ENCODE measurements at regions of chr19 and their contacts with region 1.

Region 1: DNA sequence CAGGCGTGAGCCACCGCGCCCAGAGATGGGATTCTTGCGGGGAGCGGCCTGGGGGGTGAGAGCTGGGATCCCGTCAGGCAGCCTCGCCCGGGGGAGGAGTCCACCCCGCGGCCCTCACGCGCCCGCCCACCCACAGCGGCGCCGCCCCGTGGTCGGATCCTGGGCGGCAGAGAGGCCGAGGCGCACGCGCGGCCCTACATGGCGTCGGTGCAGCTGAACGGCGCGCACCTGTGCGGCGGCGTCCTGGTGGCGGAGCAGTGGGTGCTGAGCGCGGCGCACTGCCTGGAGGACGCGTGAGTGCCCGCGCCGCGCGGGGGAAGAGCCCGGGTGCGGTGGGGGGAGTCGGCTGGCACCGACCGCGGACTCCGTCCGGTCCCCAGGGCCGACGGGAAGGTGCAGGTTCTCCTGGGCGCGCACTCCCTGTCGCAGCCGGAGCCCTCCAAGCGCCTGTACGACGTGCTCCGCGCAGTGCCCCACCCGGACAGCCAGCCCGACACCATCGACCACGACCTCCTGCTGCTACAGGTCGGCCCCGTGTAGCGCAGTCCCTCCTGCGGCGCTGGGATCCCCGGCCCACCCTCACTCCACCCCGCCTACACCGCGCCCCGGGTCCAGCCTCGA is 1.1 kb downstream of the CFD start:
- DNase-seq: peak; percentile 50
- H3K4me3 ChIP-seq: peak overlapping the region; percentile 44
- H3K27ac ChIP-seq: no peak overlapping the region
- H3K4me1 ChIP-seq: peaks cover 31% of the 10 kb centered on the region
- CTCF ChIP-seq: peak; percentile 45

Region 2: GRCh38 chr19:771332-771785 is 89.2 kb before region 1 on chr19:
- CTCF ChIA-PET with region 1: no interaction called
- POLR2A ChIA-PET with region 1: no interaction called
- intact Hi-C with region 1: loop called (anchors 2 kb)
- DNase-seq: peak; percentile 45
- H3K4me3 ChIP-seq: no peak overlapping the region
- H3K27ac ChIP-seq: no peak overlapping the region
- H3K4me1 ChIP-seq: no peaks in the 10 kb centered on the region
- CTCF ChIP-seq: peak; percentile 61

Region 3: GRCh38 chr19:835210-835810 is 25.3 kb before region 1 on chr19:
- CTCF ChIA-PET with region 1: no interaction called
- POLR2A ChIA-PET with region 1: no interaction called
- intact Hi-C with region 1: no loop called
- DNase-seq: no peak
- H3K4me3 ChIP-seq: no peak overlapping the region
- H3K27ac ChIP-seq: no peak overlapping the region
- H3K4me1 ChIP-seq: no peaks in the 10 kb centered on the region
- CTCF ChIP-seq: no peak

Region 4: DNA sequence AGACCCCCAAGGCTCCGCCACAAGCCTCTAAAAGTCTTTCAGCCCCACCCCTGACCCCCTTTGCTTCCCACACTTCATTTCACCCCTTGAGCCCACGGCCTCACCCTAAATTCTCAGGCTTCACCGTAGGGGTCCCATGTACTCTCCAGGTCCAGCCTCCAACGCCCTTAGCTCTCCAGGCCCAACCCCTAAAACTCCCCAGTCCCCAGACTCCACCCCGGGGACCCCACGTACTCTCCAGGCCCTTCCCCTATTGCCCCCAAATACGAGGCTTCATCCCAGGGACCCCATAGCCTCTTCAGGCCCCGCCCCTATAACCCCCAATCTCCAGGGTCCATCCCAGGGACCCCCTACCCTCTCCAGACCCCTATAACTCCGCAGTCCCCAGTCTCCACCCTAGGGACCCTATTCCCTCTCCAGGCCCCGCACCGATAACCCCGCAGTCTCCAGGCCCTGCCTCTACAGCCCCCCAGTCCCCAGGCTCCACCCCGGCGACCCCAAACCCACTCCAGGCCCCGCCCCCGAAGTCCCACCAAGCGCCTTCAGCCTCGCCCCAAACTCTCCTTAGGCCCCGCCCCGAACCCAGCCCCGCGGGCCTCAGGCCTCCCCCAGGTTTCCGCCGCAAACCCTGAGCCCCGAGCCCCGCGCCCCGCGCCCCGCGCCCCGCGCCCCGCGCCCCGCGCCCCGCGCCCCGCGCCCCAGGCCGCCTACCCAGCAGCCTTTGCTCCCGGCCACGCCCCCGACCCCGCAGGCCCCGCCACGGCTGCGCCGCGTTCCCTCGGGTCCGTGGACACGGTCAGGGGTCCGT is 31.9 kb after region 1 on chr19:
- CTCF ChIA-PET with region 1: interaction called, 3 read pairs
- POLR2A ChIA-PET with region 1: no interaction called
- intact Hi-C with region 1: loop called (anchors 1 kb)
- DNase-seq: peak; percentile 36
- H3K4me3 ChIP-seq: peak overlapping the region; percentile 91
- H3K27ac ChIP-seq: peak overlapping the region; percentile 43
- H3K4me1 ChIP-seq: peaks cover 5% of the 10 kb centered on the region
- CTCF ChIP-seq: no peak

Region 5: GRCh38 chr19:917323-918151 is 56.9 kb after region 1 on chr19 and contains the start of gene KISS1R:
- CTCF ChIA-PET with region 1: no interaction called
- POLR2A ChIA-PET with region 1: no interaction called
- intact Hi-C with region 1: loop called (anchors 1 kb)
- DNase-seq: peak; percentile 78
- H3K4me3 ChIP-seq: peak within 1 kb of the TSS; percentile 23
- H3K27ac ChIP-seq: no peak within 1 kb of the TSS
- H3K4me1 ChIP-seq: peaks cover 14% of the 10 kb centered on the region
- CTCF ChIP-seq: peak; percentile 87
- total RNA-seq, gene KISS1R: not detected in 2 replicates

Region 6: GRCh38 chr19:925526-926322 is 65.1 kb after region 1 on chr19 and contains the start of gene ARID3A:
- CTCF ChIA-PET with region 1: interaction called, 3 read pairs
- POLR2A ChIA-PET with region 1: no interaction called
- intact Hi-C with region 1: loop called (anchors 1 kb)
- DNase-seq: peak; percentile 85
- H3K4me3 ChIP-seq: peak within 1 kb of the TSS; percentile 91
- H3K27ac ChIP-seq: peak within 1 kb of the TSS; percentile 49
- H3K4me1 ChIP-seq: peaks cover 21% of the 10 kb centered on the region
- CTCF ChIP-seq: no peak
- total RNA-seq, gene ARID3A: 7.9 and 9.9 TPM in 2 replicates

Region 7: GRCh38 chr19:984165-984967 is 123.8 kb after region 1 on chr19 and contains the start of gene WDR18:
- CTCF ChIA-PET with region 1: no interaction called
- POLR2A ChIA-PET with region 1: no interaction called
- intact Hi-C with region 1: loop called (anchors 2 kb)
- DNase-seq: peak; percentile 93
- H3K4me3 ChIP-seq: peak within 1 kb of the TSS; percentile 92
- H3K27ac ChIP-seq: peak within 1 kb of the TSS; percentile 29
- H3K4me1 ChIP-seq: peaks cover 24% of the 10 kb centered on the region
- CTCF ChIP-seq: no peak
- total RNA-seq, gene WDR18: 61.6 and 74.7 TPM in 2 replicates

Region 8: DNA sequence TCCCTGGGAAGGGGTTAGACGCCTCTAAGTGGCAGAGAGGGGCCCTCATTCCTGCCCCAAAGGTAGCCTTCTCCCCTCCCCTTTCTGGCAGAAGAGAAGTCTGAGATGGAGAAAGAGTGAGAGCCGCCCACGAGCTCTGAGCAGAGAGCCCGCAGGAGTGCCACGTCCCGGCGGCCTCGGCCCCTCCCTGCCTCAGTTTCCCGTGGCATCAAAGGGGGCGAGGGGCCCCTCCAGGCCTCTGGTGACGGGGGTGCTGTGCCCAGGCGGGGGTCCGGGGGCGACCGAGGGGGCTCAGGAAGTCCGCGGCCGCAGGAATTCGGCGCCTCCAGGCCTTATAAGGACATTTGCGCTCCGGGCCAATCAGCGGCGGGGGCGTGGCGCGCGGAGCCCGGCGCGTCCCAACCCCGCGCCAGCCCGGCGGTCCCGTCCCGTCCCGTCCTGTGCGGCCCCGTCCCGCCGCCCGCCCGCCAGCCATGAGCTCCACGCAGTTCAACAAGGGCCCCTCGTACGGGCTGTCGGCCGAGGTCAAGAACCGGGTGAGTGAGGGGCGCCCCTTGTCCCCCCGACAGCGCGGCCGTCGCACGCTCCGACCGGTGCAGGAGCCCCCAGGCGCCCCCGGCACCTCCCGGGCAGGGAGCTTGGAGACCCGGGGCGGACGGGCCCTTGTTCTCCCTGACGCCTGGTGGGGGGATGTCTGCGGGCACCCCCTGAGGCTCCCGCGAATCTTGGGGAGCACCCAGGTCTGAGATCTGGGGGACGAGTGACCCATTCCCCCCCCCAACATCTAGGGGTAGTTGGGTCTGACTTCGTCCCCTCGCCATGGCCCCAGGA is 165.8 kb after region 1 on chr19 and contains the start of gene CNN2:
- CTCF ChIA-PET with region 1: no interaction called
- POLR2A ChIA-PET with region 1: no interaction called
- intact Hi-C with region 1: no loop called
- DNase-seq: peak; percentile 76
- H3K4me3 ChIP-seq: peak within 1 kb of the TSS; percentile 88
- H3K27ac ChIP-seq: peak within 1 kb of the TSS; percentile 77
- H3K4me1 ChIP-seq: peaks cover 48% of the 10 kb centered on the region
- CTCF ChIP-seq: no peak
- total RNA-seq, gene CNN2: 51.5 and 73.7 TPM in 2 replicates

Region 9: GRCh38 chr19:1131738-1132551 is 271.4 kb after region 1 on chr19:
- CTCF ChIA-PET with region 1: no interaction called
- POLR2A ChIA-PET with region 1: no interaction called
- intact Hi-C with region 1: no loop called
- DNase-seq: peak; percentile 89
- H3K4me3 ChIP-seq: peak overlapping the region; percentile 71
- H3K27ac ChIP-seq: peak overlapping the region; percentile 85
- H3K4me1 ChIP-seq: peaks cover 34% of the 10 kb centered on the region
- CTCF ChIP-seq: no peak

Region 10: GRCh38 chr19:1173845-1174809 is 313.5 kb after region 1 on chr19 and contains the start of gene SBNO2:
- CTCF ChIA-PET with region 1: no interaction called
- POLR2A ChIA-PET with region 1: no interaction called
- intact Hi-C with region 1: loop called (anchors 1 kb)
- DNase-seq: peak; percentile 91
- H3K4me3 ChIP-seq: peak within 1 kb of the TSS; percentile 100
- H3K27ac ChIP-seq: peak within 1 kb of the TSS; percentile 34
- H3K4me1 ChIP-seq: peaks cover 15% of the 10 kb centered on the region
- CTCF ChIP-seq: no peak
- total RNA-seq, gene SBNO2: 17.6 and 26.6 TPM in 2 replicates

Measured in OCI-LY7 (cell line).